Naive thymus-derived CD4-positive, alpha-beta T cell (primary cell): ENCODE measurements at regions of chr2 and their contacts with region 1.

Region 1: DNA sequence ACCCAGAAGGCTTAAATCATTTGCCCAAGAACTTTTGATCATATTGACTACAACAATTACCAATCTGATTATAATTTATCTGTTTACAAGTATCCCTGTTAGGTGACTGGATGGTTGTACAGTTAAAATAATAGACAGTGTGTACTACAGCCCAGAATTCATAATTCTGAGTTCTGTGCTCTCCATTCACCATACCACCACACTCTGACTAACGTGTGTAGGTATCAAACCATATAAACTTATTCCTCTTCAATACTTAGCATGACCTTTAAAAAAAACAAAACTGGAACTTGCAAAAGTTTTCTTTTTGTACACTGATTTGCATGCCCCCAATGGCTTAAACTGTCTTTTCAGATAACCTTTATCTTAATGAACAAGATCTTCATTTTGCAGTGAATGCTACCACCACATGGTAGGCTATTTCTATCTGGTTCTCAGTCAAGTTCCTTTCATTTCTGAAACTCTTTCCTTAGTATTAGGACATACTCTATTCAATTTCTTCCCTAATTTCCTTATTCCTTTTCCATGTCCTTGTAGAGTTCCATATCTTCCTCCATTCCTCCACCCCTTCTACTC is 50.9 kb downstream of the SOS1 start:
- DNase-seq: no peak
- ATAC-seq: no peak
- H3K4me3 ChIP-seq: no peak overlapping the region
- H3K4me3 Mint-ChIP-seq: peak overlapping the region in 1 of 10 donors; percentile 2
- H3K27ac ChIP-seq: no peak overlapping the region
- H3K27ac Mint-ChIP-seq: peak overlapping the region in 8 of 9 donors; percentile 0 to 56 (median 24)
- H3K4me1 ChIP-seq: no peaks in the 10 kb centered on the region
- H3K4me1 Mint-ChIP-seq: peaks cover 13 to 52% (median 27%) of the 10 kb centered on the region in 7 donors
- H3K27me3 ChIP-seq: no peaks in the 10 kb centered on the region
- H3K27me3 Mint-ChIP-seq: no peaks in the 10 kb centered on the region

Region 2: DNA sequence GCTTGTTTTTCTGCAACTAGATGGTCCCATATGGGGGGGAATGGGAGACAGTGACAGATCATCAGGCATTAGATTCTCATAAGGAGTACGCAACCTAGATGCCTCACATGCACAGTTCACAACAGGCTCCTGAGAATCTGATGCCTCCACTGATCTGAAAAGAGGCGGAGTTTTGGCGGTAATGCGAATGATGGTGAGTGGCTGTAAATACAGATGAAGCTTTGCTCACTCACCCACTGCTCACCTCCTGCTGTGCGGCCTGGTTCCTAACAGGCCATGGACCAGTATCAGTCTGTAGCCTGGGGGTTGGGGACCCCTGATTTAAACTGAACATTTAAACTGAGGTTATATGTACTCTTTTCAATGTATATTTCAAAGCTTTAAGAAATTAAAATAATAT is 10.2 kb after region 1 on chr2:
- CTCF ChIA-PET with region 1: interaction called, 3 read pairs
- POLR2A ChIA-PET with region 1: interaction called, 3 read pairs
- intact Hi-C with region 1: loop called in 1 of 2 experiments (anchors 2 kb)
- DNase-seq: no peak
- ATAC-seq: no peak
- H3K4me3 ChIP-seq: no peak overlapping the region
- H3K4me3 Mint-ChIP-seq: no peak overlapping the region
- H3K27ac ChIP-seq: no peak overlapping the region
- H3K27ac Mint-ChIP-seq: no peak overlapping the region
- H3K4me1 ChIP-seq: peaks cover 0 to 10% of the 10 kb centered on the region in 2 donors
- H3K4me1 Mint-ChIP-seq: peaks cover 15 to 60% (median 45%) of the 10 kb centered on the region in 7 donors
- H3K27me3 ChIP-seq: no peaks in the 10 kb centered on the region
- H3K27me3 Mint-ChIP-seq: no peaks in the 10 kb centered on the region